ENCODE measurements at regions of chr1 and their contacts with region 1.

Region 1: GRCh38 chr1:150067184-150068036 is at the start of gene VPS45:
- DNase-seq: peak; percentile 90
- H3K4me3 Mint-ChIP-seq: peak within 1 kb of the TSS; percentile 94
- H3K27ac Mint-ChIP-seq: peak within 1 kb of the TSS; percentile 90
- H3K4me1 Mint-ChIP-seq: peaks cover 29% of the 10 kb centered on the region
- H3K27me3 Mint-ChIP-seq: no peaks in the 10 kb centered on the region
- total RNA-seq, gene VPS45: 21.2 to 23.6 TPM

Region 2: DNA sequence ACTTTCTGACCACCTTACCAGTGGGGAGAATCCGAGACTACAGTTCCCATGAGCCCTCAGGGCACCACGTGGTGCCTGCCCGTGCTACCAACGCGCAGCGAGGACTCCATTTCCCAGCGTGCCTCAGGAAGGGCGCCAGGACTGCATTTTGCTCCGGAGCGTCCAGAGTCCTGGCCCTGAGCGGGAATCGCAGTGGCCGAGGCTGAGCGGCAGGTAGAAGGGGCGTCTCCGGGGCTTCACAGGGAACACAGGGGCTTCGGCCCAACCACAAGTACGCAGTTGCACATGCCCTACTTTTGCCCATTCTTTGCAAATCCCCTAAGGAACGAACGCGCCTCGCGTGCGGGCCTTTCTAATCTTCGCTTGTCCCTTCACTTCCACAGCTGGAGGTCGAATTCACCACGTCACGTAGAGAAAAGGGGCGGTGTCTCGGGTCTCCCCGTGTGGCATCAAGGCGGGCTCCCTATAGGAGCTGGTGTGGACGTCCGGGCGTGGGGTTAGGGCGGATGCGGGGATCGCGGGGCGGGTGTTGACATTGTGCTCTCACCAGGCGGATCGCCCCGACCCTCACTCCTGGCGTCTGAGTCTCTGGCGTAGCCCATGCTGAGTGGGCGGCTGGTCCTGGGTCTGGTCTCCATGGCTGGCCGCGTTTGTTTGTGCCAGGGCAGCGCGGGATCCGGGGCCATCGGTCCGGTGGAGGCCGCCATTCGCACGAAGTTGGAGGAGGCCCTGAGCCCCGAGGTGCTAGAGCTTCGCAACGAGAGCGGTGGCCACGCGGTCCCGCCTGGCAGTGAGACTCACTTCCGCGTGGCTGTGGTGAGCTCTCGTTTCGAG is 167.7 kb before region 1 on chr1 and contains the start of gene BOLA1:
- CTCF ChIA-PET with region 1: no interaction called
- intact Hi-C with region 1: loop called (anchors 2 kb)
- DNase-seq: peak; percentile 90
- H3K4me3 Mint-ChIP-seq: peak within 1 kb of the TSS; percentile 97
- H3K27ac Mint-ChIP-seq: peak within 1 kb of the TSS; percentile 94
- H3K4me1 Mint-ChIP-seq: peaks cover 20% of the 10 kb centered on the region
- H3K27me3 Mint-ChIP-seq: no peaks in the 10 kb centered on the region
- total RNA-seq, gene BOLA1: 24.7 to 28.7 TPM

Region 3: GRCh38 chr1:150213170-150214098 is 146.0 kb after region 1 on chr1:
- CTCF ChIA-PET with region 1: no interaction called
- intact Hi-C with region 1: loop called (anchors 1 kb)
- DNase-seq: peak; percentile 96
- H3K4me3 Mint-ChIP-seq: peak overlapping the region; percentile 81
- H3K27ac Mint-ChIP-seq: peak overlapping the region; percentile 92
- H3K4me1 Mint-ChIP-seq: peaks cover 15% of the 10 kb centered on the region
- H3K27me3 Mint-ChIP-seq: no peaks in the 10 kb centered on the region

Measured in activated naive CD4-positive, alpha-beta T cell treated with anti-CD3 and anti-CD28 coated beads for 36 hours (primary cell).